ENCODE measurements at regions of chr13 and their contacts with region 1.

Region 1: GRCh38 chr13:112616586-112617362 is 28.8 kb upstream of the TUBGCP3 start:
- DNase-seq: peak in 1 of 2 experiments; percentile 49
- H3K4me3 ChIP-seq: no peak overlapping the region
- H3K4me3 Mint-ChIP-seq: no peak overlapping the region
- H3K27ac Mint-ChIP-seq: no peak overlapping the region
- H3K4me1 ChIP-seq: peaks cover 10% of the 10 kb centered on the region
- H3K4me1 Mint-ChIP-seq: peaks cover 6% of the 10 kb centered on the region
- H3K27me3 ChIP-seq: no peaks in the 10 kb centered on the region
- H3K27me3 Mint-ChIP-seq: peaks cover 5% of the 10 kb centered on the region
- CTCF ChIP-seq: peak; percentile 56 to 72

Region 2: GRCh38 chr13:110880627-110881026 is 1736.1 kb before region 1 on chr13:
- CTCF ChIA-PET with region 1: interaction called, 11 read pairs
- POLR2A ChIA-PET with region 1: no interaction called
- intact Hi-C with region 1: no loop called
- DNase-seq: no peak
- H3K4me3 ChIP-seq: no peak overlapping the region
- H3K4me3 Mint-ChIP-seq: no peak overlapping the region
- H3K27ac Mint-ChIP-seq: no peak overlapping the region
- H3K4me1 ChIP-seq: no peaks in the 10 kb centered on the region
- H3K4me1 Mint-ChIP-seq: no peaks in the 10 kb centered on the region
- H3K27me3 ChIP-seq: no peaks in the 10 kb centered on the region
- H3K27me3 Mint-ChIP-seq: no peaks in the 10 kb centered on the region
- CTCF ChIP-seq: no peak

Region 3: DNA sequence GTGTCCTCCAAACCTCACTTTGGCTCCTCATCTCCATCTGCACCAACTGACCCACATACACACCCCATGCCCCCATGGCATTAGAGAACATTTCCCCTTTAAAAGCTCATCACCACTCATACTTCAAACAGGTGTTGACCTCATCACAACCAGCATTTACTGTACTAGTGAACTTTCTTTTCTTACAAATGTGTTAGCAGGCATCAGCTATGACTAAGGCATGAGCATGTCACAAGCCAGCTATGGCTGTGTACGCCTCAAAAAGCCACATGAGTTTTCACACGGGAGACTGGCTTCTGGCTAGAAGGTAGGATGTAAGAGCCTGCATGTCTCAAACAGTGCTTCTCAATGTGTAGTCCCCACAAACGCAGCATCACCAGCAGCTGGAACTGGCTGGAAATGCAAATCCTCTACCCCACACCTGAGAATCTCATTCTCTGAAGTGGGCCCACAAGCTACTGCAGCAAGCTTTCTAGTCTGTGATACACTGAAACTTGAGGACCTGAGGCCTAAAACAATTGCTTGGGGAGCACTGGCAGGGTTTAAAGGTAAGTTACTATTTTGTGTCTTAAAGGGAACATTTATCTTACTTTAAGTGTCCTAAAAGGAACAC is 95.6 kb before region 1 on chr13:
- CTCF ChIA-PET with region 1: no interaction called
- POLR2A ChIA-PET with region 1: no interaction called
- intact Hi-C with region 1: no loop called
- DNase-seq: no peak
- H3K4me3 ChIP-seq: no peak overlapping the region
- H3K4me3 Mint-ChIP-seq: no peak overlapping the region
- H3K27ac Mint-ChIP-seq: no peak overlapping the region
- H3K4me1 ChIP-seq: no peaks in the 10 kb centered on the region
- H3K4me1 Mint-ChIP-seq: no peaks in the 10 kb centered on the region
- H3K27me3 ChIP-seq: no peaks in the 10 kb centered on the region
- H3K27me3 Mint-ChIP-seq: no peaks in the 10 kb centered on the region
- CTCF ChIP-seq: no peak

Region 4: GRCh38 chr13:112669881-112670499 is 53.2 kb after region 1 on chr13:
- CTCF ChIA-PET with region 1: no interaction called
- POLR2A ChIA-PET with region 1: no interaction called
- intact Hi-C with region 1: loop called (anchors 5 kb)
- DNase-seq: peak; percentile 39 to 50
- H3K4me3 ChIP-seq: no peak overlapping the region
- H3K4me3 Mint-ChIP-seq: no peak overlapping the region
- H3K27ac Mint-ChIP-seq: no peak overlapping the region
- H3K4me1 ChIP-seq: peaks cover 7% of the 10 kb centered on the region; the same call in 1 of the 2 replicates
- H3K4me1 Mint-ChIP-seq: peaks cover 7% of the 10 kb centered on the region
- H3K27me3 ChIP-seq: no peaks in the 10 kb centered on the region
- H3K27me3 Mint-ChIP-seq: no peaks in the 10 kb centered on the region
- CTCF ChIP-seq: peak in 1 of 2 experiments; percentile 22

Region 5: GRCh38 chr13:112783135-112783977 is 166.6 kb after region 1 on chr13:
- CTCF ChIA-PET with region 1: no interaction called
- POLR2A ChIA-PET with region 1: no interaction called
- intact Hi-C with region 1: no loop called
- DNase-seq: no peak
- H3K4me3 ChIP-seq: no peak overlapping the region
- H3K4me3 Mint-ChIP-seq: no peak overlapping the region
- H3K27ac Mint-ChIP-seq: no peak overlapping the region
- H3K4me1 ChIP-seq: no peaks in the 10 kb centered on the region
- H3K4me1 Mint-ChIP-seq: no peaks in the 10 kb centered on the region
- H3K27me3 ChIP-seq: no peaks in the 10 kb centered on the region
- H3K27me3 Mint-ChIP-seq: no peaks in the 10 kb centered on the region
- CTCF ChIP-seq: no peak

Region 6: GRCh38 chr13:112873851-112874750 is 257.3 kb after region 1 on chr13:
- CTCF ChIA-PET with region 1: no interaction called
- POLR2A ChIA-PET with region 1: no interaction called
- intact Hi-C with region 1: loop called (anchors 5 kb)
- DNase-seq: peak; percentile 82 to 87
- H3K4me3 ChIP-seq: no peak overlapping the region
- H3K4me3 Mint-ChIP-seq: no peak overlapping the region
- H3K27ac Mint-ChIP-seq: peak overlapping the region; percentile 26
- H3K4me1 ChIP-seq: peaks cover 9% of the 10 kb centered on the region; the same call in 1 of the 2 replicates
- H3K4me1 Mint-ChIP-seq: peaks cover 15% of the 10 kb centered on the region
- H3K27me3 ChIP-seq: no peaks in the 10 kb centered on the region
- H3K27me3 Mint-ChIP-seq: no peaks in the 10 kb centered on the region
- CTCF ChIP-seq: peak; percentile 94 to 97

Measured in Caco-2 (cell line).